CD4-positive, alpha-beta memory T cell (primary cell): ENCODE measurements at regions of chr15 and their contacts with region 1.

Region 1: DNA sequence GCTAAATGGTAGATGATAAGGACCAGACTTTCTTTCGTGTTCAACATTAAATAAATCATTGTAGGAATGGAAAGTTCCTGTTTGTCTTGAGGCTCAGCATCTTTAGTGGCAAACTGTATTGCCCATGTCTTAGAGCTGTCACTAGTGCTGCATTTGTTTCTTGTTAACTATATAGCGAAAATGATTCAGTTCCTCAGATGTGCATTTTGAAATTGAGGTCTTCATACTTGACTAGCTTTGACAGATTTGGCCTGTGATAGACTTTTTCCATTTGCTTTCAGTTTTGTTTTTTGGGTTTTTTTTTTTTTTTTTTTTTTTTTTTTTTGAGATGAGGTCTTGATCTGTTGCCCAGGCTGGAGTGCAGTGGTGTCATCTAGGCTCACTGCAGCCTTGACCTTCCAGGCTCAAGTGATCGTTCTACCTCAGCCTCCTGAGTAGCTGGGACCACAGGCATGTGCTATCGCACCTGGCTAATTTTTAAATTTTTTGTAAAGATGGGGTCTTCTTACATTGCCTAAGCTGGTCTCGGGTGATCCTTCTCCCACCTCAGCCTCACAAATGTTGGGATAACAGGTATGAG is 9.5 kb upstream of the RPLP1 start:
- DNase-seq: no peak
- H3K4me3 ChIP-seq: no peak overlapping the region
- H3K4me3 Mint-ChIP-seq: peak overlapping the region in 4 of 8 donors; percentile 31 to 73 (median 50)
- H3K27ac ChIP-seq: peak overlapping the region; percentile 22
- H3K27ac Mint-ChIP-seq: peak overlapping the region in 6 of 7 donors; percentile 0 to 83 (median 51)
- H3K4me1 ChIP-seq: peaks cover 7% of the 10 kb centered on the region
- H3K4me1 Mint-ChIP-seq: peaks cover 3 to 15% (median 6%) of the 10 kb centered on the region in 4 donors
- H3K27me3 ChIP-seq: no peaks in the 10 kb centered on the region
- H3K27me3 Mint-ChIP-seq: no peaks in the 10 kb centered on the region

Region 2: DNA sequence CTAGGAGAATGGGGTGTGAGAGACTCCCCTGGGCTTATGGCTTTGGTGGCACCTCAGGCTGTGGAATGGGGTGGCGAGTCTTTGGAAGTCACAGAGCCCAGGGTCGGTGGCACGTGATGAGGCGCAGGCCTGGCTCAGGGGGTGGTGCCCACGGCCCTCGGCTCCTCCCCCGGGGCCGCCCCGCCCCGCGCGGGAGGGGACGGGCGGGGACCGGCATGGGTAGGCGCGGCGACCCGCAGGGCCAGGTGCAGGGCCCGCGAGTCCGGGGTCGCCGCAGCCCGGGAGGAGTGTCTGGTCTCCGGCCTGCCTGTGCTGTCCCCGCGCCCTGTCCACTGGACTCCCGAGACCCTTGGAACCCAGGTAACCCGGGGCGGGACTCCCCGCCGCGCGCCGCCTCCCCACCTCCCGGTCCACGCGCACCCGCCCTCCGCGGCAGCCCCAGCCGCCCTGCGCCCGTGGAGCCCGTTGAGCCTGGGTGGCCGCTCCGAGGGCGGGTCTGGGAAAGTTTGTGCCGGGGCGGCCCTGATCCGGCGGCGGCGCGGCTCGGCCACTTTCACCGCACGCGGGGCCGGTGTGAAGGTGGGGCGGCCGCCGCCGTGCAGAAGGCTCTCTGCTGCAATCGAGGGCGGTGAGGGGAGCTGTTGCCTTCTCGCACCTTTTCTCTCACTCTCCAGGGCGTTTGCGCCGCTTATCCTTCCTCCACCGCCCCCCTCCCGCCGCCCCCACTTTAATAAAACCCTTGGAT is 144.3 kb before region 1 on chr15 and contains the start of gene PAQR5:
- CTCF ChIA-PET with region 1: no interaction called
- POLR2A ChIA-PET with region 1: no interaction called
- intact Hi-C with region 1: no loop called
- DNase-seq: no peak
- H3K4me3 ChIP-seq: no peak within 1 kb of the TSS
- H3K4me3 Mint-ChIP-seq: peak within 1 kb of the TSS; percentile 12 to 71 (median 58)
- H3K27ac ChIP-seq: no peak within 1 kb of the TSS
- H3K27ac Mint-ChIP-seq: no peak within 1 kb of the TSS
- H3K4me1 ChIP-seq: no peaks in the 10 kb centered on the region
- H3K4me1 Mint-ChIP-seq: peaks cover 0 to 4% (median 3%) of the 10 kb centered on the region in 4 donors
- H3K27me3 ChIP-seq: peaks cover 17% of the 10 kb centered on the region
- H3K27me3 Mint-ChIP-seq: peaks cover 19 to 49% of the 10 kb centered on the region in 2 donors
- total RNA-seq, gene PAQR5: 0.20 TPM in 1 of 2 experiments, not detected in the other

Region 3: GRCh38 chr15:69462493-69463181 is 19.5 kb after region 1 on chr15:
- CTCF ChIA-PET with region 1: interaction called, 19 read pairs
- POLR2A ChIA-PET with region 1: interaction called, 3 read pairs
- intact Hi-C with region 1: no loop called
- DNase-seq: peak; percentile 87 to 90 (median 89)
- H3K4me3 ChIP-seq: peak overlapping the region; percentile 59 to 76
- H3K4me3 Mint-ChIP-seq: peak overlapping the region; percentile 88 to 95 (median 92)
- H3K27ac ChIP-seq: peak overlapping the region; percentile 80
- H3K27ac Mint-ChIP-seq: peak overlapping the region; percentile 89 to 99 (median 96)
- H3K4me1 ChIP-seq: peaks cover 44% of the 10 kb centered on the region
- H3K4me1 Mint-ChIP-seq: peaks cover 17 to 56% (median 33%) of the 10 kb centered on the region in 4 donors
- H3K27me3 ChIP-seq: no peaks in the 10 kb centered on the region
- H3K27me3 Mint-ChIP-seq: no peaks in the 10 kb centered on the region